ENCODE measurements at regions of chr16 and their contacts with region 1.

Region 1: GRCh38 chr16:57300387-57301125 is 16.1 kb upstream of the PLLP start:
- DNase-seq: peak; percentile 100
- H3K4me3 Mint-ChIP-seq: no peak overlapping the region
- H3K27ac Mint-ChIP-seq: peak overlapping the region; percentile 30
- H3K4me1 Mint-ChIP-seq: peaks cover 23% of the 10 kb centered on the region
- H3K27me3 Mint-ChIP-seq: no peaks in the 10 kb centered on the region

Region 2: DNA sequence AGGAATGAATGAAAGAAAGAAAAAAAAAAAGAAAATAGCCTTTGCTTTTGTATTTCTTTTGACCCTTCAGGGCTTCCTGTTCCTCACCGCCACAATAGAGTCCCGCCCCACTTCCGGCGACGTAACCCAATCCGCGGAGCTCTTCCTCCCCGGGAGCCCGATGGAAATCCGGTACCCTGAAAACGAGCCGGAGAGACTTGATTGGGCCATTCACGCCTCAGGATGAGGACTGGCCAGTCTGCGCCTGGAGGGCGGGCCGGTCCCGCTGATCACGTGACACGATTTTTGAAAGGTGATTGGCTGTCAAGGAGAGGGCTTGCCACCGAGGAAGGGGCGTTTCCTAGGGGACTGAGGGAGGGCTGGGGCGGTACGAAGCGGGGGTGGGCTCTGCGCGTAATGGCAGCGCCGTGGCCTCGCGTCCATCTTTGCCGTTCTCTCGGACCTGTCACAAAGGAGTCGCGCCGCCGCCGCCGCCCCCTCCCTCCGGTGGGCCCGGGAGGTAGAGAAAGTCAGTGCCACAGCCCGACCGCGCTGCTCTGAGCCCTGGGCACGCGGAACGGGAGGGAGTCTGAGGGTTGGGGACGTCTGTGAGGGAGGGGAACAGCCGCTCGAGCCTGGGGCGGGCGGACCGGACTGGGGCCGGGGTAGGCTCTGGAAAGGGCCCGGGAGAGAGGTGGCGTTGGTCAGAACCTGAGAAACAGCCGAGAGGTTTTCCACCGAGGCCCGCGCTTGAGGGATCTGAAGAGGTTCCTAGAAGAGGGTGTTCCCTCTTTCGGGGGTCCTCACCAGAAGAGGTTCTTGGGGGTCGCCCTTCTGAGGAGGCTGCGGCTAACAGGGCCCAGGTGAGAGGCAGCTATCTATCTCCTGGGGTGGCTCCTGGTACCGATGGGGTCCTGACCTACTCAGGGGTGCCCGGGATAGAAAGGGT is 114.3 kb before region 1 on chr16 and contains the starts of genes PSME3IP1 and RSPRY1:
- intact Hi-C with region 1: loop called (anchors 5 kb)
- DNase-seq: peak; percentile 100
- H3K4me3 Mint-ChIP-seq: peak within 1 kb of the TSS; percentile 97
- H3K27ac Mint-ChIP-seq: peak within 1 kb of the TSS; percentile 98
- H3K4me1 Mint-ChIP-seq: peaks cover 34% of the 10 kb centered on the region
- H3K27me3 Mint-ChIP-seq: peaks cover 2% of the 10 kb centered on the region
- total RNA-seq, gene PSME3IP1: 126 and 130 TPM in 2 replicates
- total RNA-seq, gene RSPRY1: 33.0 and 36.6 TPM in 2 replicates

Region 3: DNA sequence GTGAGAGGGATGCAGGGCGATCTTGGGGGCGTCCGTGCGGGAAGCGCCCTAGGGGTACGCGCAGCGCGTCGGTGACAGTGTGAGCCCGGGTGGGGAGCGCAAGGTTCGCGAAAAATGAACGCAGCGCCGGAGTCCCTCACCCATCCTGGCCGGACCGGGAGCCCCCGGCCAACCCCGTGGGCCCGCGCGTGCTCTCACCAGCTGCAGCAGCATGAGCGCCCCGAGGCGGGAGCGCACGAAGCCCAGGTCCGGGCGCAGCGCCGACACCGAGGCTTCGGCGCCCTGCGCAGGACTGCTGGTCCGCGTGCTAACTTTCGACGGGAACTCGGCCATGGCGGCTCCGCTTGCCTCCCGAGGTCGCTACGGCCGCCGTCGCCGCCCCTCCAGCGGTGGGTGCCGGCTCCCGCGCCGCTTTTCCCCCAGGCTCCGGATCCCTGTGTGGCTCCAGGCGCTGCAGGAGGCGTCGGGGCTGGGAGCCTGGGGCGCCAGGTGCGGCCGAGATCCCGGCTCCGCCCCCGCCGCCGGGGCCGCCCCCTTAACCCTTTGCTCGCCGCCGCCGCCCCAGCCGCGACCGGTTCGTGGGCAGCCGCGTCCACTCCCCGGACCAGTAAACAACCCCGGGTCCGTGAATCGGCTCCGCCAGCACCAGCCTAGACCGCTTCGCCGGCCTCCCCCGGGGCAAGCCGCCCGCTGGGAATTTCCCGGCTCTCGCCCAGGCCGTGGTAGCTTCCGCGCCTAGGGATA is 16.2 kb before region 1 on chr16 and contains the start of gene PLLP:
- intact Hi-C with region 1: loop called (anchors 1 kb)
- DNase-seq: peak; percentile 86
- H3K4me3 Mint-ChIP-seq: peak within 1 kb of the TSS; percentile 77
- H3K27ac Mint-ChIP-seq: peak within 1 kb of the TSS; percentile 63
- H3K4me1 Mint-ChIP-seq: peaks cover 21% of the 10 kb centered on the region
- H3K27me3 Mint-ChIP-seq: peaks cover 35% of the 10 kb centered on the region
- total RNA-seq, gene PLLP: not detected in 2 replicates

Region 4: GRCh38 chr16:57422026-57422944 is 121.7 kb after region 1 on chr16:
- intact Hi-C with region 1: loop called (anchors 1 kb)
- DNase-seq: no peak
- H3K4me3 Mint-ChIP-seq: no peak overlapping the region
- H3K27ac Mint-ChIP-seq: no peak overlapping the region
- H3K4me1 Mint-ChIP-seq: peaks cover 8% of the 10 kb centered on the region
- H3K27me3 Mint-ChIP-seq: peaks cover 2% of the 10 kb centered on the region

Region 5: DNA sequence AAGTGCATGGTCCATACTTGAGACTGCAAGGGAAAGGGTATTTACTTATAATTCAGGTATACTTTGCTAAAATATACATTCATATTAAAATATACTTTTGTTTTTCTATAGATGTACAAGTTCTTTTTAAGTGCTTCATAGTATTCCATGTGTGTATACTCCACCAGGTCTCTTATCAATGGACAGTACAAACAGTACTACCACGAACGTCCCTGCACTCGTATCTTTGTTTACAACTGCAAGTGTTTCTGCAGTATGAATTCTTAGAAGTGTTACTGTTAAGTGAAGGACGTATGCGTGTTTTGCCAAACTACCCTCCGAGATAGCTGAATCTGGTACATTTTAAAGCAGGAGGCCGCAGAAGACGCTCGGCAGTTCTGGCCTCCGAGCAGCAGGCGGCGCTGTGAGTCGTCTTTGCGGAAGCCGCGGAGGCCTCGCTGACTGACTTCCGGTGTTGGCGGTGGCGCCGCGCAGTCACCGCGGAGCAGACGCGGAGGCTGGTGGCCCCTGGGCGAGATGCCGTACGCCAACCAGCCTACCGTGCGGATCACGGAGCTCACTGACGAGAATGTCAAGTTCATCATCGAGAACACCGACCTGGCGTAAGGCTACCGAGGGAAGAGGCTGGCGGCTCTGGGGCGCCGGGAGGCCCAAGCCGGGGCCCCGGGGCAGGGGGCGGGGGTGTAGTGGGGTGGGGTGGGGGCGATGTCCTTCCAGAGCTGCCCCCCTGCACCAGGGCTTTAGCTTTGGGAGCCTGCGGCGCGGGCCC is 161.8 kb after region 1 on chr16 and contains the start of gene POLR2C:
- intact Hi-C with region 1: loop called (anchors 1 kb)
- DNase-seq: peak; percentile 98
- H3K4me3 Mint-ChIP-seq: peak within 1 kb of the TSS; percentile 96
- H3K27ac Mint-ChIP-seq: peak within 1 kb of the TSS; percentile 100
- H3K4me1 Mint-ChIP-seq: peaks cover 27% of the 10 kb centered on the region
- H3K27me3 Mint-ChIP-seq: no peaks in the 10 kb centered on the region
- total RNA-seq, gene POLR2C: 88.5 and 90.7 TPM in 2 replicates

Region 6: DNA sequence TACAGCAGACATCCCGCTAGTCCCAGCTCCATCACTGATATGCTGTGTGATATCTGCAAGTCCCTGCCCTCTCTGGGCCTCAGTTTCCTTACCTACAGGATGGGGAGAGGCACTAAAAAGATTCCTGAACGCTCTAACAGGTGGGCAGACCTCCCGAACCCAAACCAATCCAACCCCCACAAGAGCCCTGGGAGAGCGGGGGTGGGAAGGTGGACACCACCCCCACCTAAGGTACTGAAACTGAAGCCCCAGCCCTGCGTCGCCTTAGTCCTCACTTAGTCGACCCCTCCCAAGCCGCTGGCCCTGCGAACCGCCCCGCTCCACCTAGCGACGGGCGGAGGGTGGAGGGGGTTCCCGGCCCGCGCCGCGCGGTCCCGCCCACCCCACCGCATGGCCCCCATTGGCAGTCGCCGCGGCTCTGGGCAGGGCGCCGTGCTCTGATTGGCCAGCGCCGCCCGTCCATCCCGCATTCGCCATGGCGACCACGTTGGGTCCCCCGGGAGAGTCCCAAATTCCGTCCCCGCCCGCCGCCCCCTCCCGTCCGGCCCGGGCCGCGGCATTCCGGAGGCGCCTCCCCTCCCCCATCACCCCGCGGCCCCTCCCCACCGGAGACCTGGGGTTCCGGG is 235.2 kb after region 1 on chr16:
- intact Hi-C with region 1: loop called (anchors 1 kb)
- DNase-seq: peak; percentile 98
- H3K4me3 Mint-ChIP-seq: peak overlapping the region; percentile 86
- H3K27ac Mint-ChIP-seq: peak overlapping the region; percentile 89
- H3K4me1 Mint-ChIP-seq: peaks cover 63% of the 10 kb centered on the region
- H3K27me3 Mint-ChIP-seq: no peaks in the 10 kb centered on the region

Region 7: GRCh38 chr16:58733671-58734458 is 1433.3 kb after region 1 on chr16 and contains the start of gene GOT2:
- intact Hi-C with region 1: loop called (anchors 10 kb)
- DNase-seq: peak; percentile 95
- H3K4me3 Mint-ChIP-seq: peak within 1 kb of the TSS; percentile 93
- H3K27ac Mint-ChIP-seq: peak within 1 kb of the TSS; percentile 98
- H3K4me1 Mint-ChIP-seq: peaks cover 17% of the 10 kb centered on the region
- H3K27me3 Mint-ChIP-seq: peaks cover 2% of the 10 kb centered on the region
- total RNA-seq, gene GOT2: 141 and 144 TPM in 2 replicates

Measured in activated CD4-positive, alpha-beta T cell treated with anti-CD3 and anti-CD28 coated beads, Interleukin-2, amount 10 ng/mL, durations not matched to agents 24 days and 14 days (primary cell).